ENCODE measurements at regions of chr10 and their contacts with region 1.

Region 1: DNA sequence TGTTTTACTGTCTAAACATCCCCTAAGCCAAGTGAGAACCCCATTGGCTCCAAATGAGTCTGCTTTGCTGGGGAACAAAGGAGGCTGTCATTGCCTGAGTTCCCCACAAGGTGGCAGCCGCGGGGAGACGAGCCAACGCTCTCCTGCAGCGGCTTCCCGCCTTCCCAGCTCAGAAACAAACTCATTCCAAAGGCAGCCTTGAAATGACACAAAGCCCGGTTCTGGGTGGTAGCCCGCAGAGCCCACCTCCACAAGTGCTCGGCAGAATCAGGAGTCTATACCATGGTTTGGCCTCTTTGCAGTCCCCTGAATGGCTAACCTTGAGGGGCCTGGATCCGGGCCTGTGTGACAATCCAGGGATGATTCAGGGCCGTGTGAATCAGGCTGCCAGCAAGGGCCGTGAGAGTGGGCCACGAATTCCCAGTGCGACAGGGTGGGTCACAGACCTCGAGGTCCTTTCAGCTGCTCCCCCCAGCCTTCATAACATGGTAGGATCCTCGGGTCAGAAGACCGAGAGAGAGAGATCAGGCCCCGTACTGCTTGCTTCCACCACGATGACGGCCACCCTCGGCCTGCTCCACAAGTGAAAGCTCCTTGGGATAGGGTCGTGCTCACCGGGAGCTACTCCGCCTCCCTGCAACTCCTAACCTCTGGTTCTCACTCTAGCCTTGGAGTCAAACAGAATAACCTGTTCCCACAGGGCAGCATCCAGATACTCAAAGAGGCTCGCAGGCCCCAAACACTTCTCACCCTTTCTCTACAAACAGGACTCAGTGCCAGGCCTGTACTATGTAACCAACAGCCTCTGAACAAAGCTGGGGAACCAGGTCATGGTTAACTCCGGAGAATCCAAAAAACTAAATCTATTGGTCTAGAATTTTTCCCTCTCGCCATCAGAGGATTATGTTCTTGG is 79.6 kb downstream of the DLG5 start:
- DNase-seq: peak; percentile 66
- ATAC-seq: peak; percentile 75
- H3K4me3 ChIP-seq: no peak overlapping the region
- H3K4me3 Mint-ChIP-seq: no peak overlapping the region
- H3K27ac ChIP-seq: no peak overlapping the region
- H3K27ac Mint-ChIP-seq: no peak overlapping the region
- H3K4me1 ChIP-seq: peaks cover 0 to 12% of the 10 kb centered on the region in 2 donors
- H3K4me1 Mint-ChIP-seq: peaks cover 8% of the 10 kb centered on the region
- H3K27me3 ChIP-seq: no peaks in the 10 kb centered on the region
- H3K27me3 Mint-ChIP-seq: no peaks in the 10 kb centered on the region
- CTCF ChIP-seq: peak; percentile 96

Region 2: GRCh38 chr10:77873536-77874380 is 26.8 kb after region 1 on chr10:
- CTCF ChIA-PET with region 1: interaction called, 12 read pairs
- POLR2A ChIA-PET with region 1: no interaction called
- intact Hi-C with region 1: loop called (anchors 2 kb)
- DNase-seq: peak; percentile 58
- ATAC-seq: peak; percentile 65
- H3K4me3 ChIP-seq: peak overlapping the region in 2 of 5 experiments; percentile 10
- H3K4me3 Mint-ChIP-seq: peak overlapping the region; percentile 82
- H3K27ac ChIP-seq: peak overlapping the region; percentile 30 to 65
- H3K27ac Mint-ChIP-seq: peak overlapping the region; percentile 87
- H3K4me1 ChIP-seq: peaks cover 28 to 37% of the 10 kb centered on the region in 2 donors
- H3K4me1 Mint-ChIP-seq: peaks cover 38% of the 10 kb centered on the region
- H3K27me3 ChIP-seq: no peaks in the 10 kb centered on the region
- H3K27me3 Mint-ChIP-seq: no peaks in the 10 kb centered on the region
- CTCF ChIP-seq: no peak

Measured in B cell (primary cell).